ENCODE measurements at regions of chr18 and their contacts with region 1.

Region 1: GRCh38 chr18:24947521-24948305 is 404.3 kb downstream of the ZNF521 start:
- DNase-seq: no peak
- ATAC-seq: no peak
- H3K4me3 ChIP-seq: no peak overlapping the region
- H3K27ac ChIP-seq: no peak overlapping the region
- H3K4me1 ChIP-seq: no peaks in the 10 kb centered on the region
- H3K27me3 ChIP-seq: no peaks in the 10 kb centered on the region

Region 2: DNA sequence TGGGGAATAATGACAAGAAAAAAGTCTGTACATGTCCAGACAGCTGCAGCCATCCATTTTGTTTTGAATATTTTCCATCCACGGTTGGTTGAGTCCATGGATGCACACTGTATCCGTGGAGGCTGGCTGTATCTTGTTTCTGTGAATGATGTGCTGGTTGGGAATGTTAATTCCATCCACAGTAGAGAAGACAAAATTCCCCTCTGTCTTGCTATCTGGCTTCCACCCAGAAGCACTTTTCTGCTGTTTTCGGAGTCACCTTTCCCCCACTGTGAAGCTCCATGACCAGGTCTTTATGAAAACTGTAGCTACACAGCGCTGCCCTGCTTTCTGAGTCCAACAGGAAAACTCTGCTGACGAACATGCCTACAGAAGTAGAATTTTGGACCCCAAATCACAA is 364.9 kb before region 1 on chr18:
- intact Hi-C with region 1: no loop called
- DNase-seq: no peak
- ATAC-seq: no peak
- H3K4me3 ChIP-seq: no peak overlapping the region
- H3K27ac ChIP-seq: no peak overlapping the region
- H3K4me1 ChIP-seq: no peaks in the 10 kb centered on the region
- H3K27me3 ChIP-seq: no peaks in the 10 kb centered on the region

Region 3: GRCh38 chr18:24885276-24885675 is 62.4 kb before region 1 on chr18:
- intact Hi-C with region 1: loop called in 1 of 2 experiments (anchors 10 kb)
- DNase-seq: no peak
- ATAC-seq: no peak
- H3K4me3 ChIP-seq: no peak overlapping the region
- H3K27ac ChIP-seq: no peak overlapping the region
- H3K4me1 ChIP-seq: no peaks in the 10 kb centered on the region
- H3K27me3 ChIP-seq: no peaks in the 10 kb centered on the region

Measured in aorta (tissue), 5 donors.